Thyroid gland (tissue), 4 donors: ENCODE measurements at regions of chr2 and their contacts with region 1.

Region 1: GRCh38 chr2:236180831-236181453 is 12.8 kb upstream of the GBX2 start:
- DNase-seq: peak; percentile 55
- H3K4me3 ChIP-seq: no peak overlapping the region
- H3K27ac ChIP-seq: no peak overlapping the region
- H3K4me1 ChIP-seq: peaks cover 4 to 22% of the 10 kb centered on the region in 2 donors
- H3K27me3 ChIP-seq: peaks cover 41% of the 10 kb centered on the region
- CTCF ChIP-seq: peak; percentile 14 to 62 (median 52)
- POLR2A ChIP-seq: no peak

Region 2: DNA sequence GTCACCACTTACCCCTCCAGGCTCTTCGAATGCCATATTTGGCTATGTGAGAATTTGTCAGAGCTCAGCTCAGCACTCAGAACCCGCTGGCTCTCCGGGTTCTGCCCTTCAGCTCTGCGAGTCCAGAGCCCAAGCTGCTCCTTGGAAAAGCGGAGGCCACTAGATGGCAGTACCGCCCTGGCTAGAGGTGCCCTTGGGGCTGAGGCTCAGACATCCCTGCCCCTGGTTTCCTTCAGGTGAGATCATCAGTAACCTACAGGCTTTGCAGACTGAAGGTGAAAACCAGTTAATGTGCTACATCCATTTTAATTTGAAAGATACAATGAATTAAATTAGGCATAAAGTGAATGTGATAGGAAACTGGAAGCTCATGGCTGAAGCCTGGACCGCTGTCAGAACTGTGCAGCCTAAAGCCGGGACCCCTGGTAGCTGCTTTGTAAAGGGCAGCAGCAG is 401.5 kb before region 1 on chr2:
- intact Hi-C with region 1: loop called (anchors 5 kb)
- DNase-seq: peak; percentile 81 to 87
- H3K4me3 ChIP-seq: no peak overlapping the region
- H3K27ac ChIP-seq: no peak overlapping the region
- H3K4me1 ChIP-seq: no peaks in the 10 kb centered on the region
- H3K27me3 ChIP-seq: no peaks in the 10 kb centered on the region
- CTCF ChIP-seq: peak; percentile 50 to 91 (median 78)
- POLR2A ChIP-seq: no peak

Region 3: GRCh38 chr2:236503100-236503499 is 322.2 kb after region 1 on chr2:
- intact Hi-C with region 1: no loop called
- DNase-seq: peak in 1 of 2 donors; percentile 25
- H3K4me3 ChIP-seq: no peak overlapping the region
- H3K27ac ChIP-seq: no peak overlapping the region
- H3K4me1 ChIP-seq: peaks cover 34% of the 10 kb centered on the region in 2 donors
- H3K27me3 ChIP-seq: no peaks in the 10 kb centered on the region
- CTCF ChIP-seq: peak in 3 of 6 experiments; percentile 17 to 24 (median 21)
- POLR2A ChIP-seq: no peak